Naive thymus-derived CD4-positive, alpha-beta T cell (primary cell): ENCODE measurements at regions of chr6 and their contacts with region 1.

Region 1: DNA sequence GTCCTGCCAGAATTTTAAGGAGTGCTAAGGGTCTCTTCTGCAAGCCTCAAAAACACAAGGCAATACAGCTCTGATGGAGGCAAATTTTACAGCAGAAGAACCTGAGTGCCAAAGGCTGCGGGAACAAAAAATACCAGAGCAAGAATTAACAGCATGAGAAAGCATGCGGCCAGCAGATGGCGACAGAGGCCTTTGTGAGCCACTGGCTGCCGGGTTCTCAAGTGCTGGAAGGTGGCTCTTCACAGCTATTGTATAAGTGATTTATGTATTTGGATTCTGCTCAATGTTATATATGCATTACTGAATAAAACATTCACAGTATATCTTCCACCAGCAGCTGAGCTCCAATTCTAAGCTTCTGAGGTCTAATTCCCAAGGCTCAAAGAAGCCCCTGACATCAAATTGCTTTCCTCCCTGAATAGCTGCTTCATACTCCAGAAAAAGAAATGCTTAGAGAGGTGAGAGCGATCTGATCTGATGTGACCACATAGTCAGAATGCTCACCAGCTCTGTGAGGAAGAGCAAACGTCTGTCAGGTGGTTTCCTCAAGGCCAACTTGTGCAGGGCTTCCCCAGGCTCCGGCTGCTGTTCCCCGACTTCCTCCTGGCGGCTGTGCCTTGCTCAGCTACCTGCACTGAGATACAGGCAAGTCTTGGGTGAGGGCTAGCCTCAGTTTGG is 58.6 kb downstream of the PPP1R3G start:
- DNase-seq: peak; percentile 61 to 86 (median 73)
- ATAC-seq: peak; percentile 84
- H3K4me3 ChIP-seq: no peak overlapping the region
- H3K4me3 Mint-ChIP-seq: no peak overlapping the region
- H3K27ac ChIP-seq: no peak overlapping the region
- H3K27ac Mint-ChIP-seq: peak overlapping the region in 2 of 9 donors; percentile 18 to 25
- H3K4me1 ChIP-seq: no peaks in the 10 kb centered on the region
- H3K4me1 Mint-ChIP-seq: peaks cover 0 to 7% (median 5%) of the 10 kb centered on the region in 7 donors
- H3K27me3 ChIP-seq: no peaks in the 10 kb centered on the region
- H3K27me3 Mint-ChIP-seq: no peaks in the 10 kb centered on the region

Region 2: DNA sequence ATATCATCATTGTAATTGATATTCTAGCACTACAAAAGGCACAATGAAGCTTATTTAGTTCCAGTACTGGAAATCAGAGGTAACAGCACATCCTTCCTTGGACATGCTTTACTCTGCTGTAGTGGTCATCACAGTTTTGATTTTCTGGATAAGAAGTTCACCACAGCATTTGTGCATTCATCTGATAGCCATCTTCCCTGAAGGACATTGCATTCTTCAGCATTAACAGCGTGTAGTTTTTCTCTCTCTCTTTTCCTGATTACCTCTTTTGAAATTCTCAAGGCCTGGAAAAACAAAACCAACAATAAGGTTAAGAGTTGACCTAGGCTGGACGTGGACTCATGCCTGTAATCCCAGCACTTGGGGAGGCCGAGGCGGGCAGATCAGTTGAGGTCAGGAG is 1028.0 kb before region 1 on chr6:
- CTCF ChIA-PET with region 1: no interaction called
- POLR2A ChIA-PET with region 1: no interaction called
- intact Hi-C with region 1: no loop called
- DNase-seq: no peak
- ATAC-seq: no peak
- H3K4me3 ChIP-seq: no peak overlapping the region
- H3K4me3 Mint-ChIP-seq: peak overlapping the region in 1 of 10 donors; percentile 52
- H3K27ac ChIP-seq: no peak overlapping the region
- H3K27ac Mint-ChIP-seq: no peak overlapping the region
- H3K4me1 ChIP-seq: no peaks in the 10 kb centered on the region
- H3K4me1 Mint-ChIP-seq: peaks cover 0 to 4% (median 0%) of the 10 kb centered on the region in 7 donors
- H3K27me3 ChIP-seq: no peaks in the 10 kb centered on the region
- H3K27me3 Mint-ChIP-seq: peaks cover 0 to 17% (median 0%) of the 10 kb centered on the region in 5 donors

Region 3: DNA sequence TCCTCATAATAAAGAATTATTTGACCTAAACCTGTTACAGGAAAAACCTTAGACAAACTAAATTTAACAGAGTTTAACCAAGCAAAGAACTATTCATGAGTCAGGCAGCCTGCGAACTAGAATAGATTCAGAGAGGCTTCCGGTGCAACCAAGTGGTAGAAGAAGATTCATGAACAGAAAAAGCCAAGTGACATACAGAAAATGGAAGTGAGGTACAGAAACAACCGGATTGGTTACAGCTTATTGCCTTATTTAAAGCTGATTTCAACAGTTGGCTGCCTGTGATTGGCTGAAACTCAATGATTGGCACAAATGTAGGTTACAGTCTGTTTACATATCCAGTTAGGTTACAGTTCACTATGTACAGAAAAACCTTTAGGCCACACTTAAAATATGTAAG is 48.5 kb before region 1 on chr6:
- CTCF ChIA-PET with region 1: no interaction called
- POLR2A ChIA-PET with region 1: no interaction called
- intact Hi-C with region 1: no loop called
- DNase-seq: no peak
- ATAC-seq: no peak
- H3K4me3 ChIP-seq: no peak overlapping the region
- H3K4me3 Mint-ChIP-seq: no peak overlapping the region
- H3K27ac ChIP-seq: no peak overlapping the region
- H3K27ac Mint-ChIP-seq: no peak overlapping the region
- H3K4me1 ChIP-seq: no peaks in the 10 kb centered on the region
- H3K4me1 Mint-ChIP-seq: peaks cover 0 to 18% (median 14%) of the 10 kb centered on the region in 7 donors
- H3K27me3 ChIP-seq: no peaks in the 10 kb centered on the region
- H3K27me3 Mint-ChIP-seq: peaks cover 19 to 26% (median 22%) of the 10 kb centered on the region in 5 donors

Region 4: GRCh38 chr6:5174244-5174643 is 30.5 kb after region 1 on chr6:
- CTCF ChIA-PET with region 1: interaction called, 9 read pairs
- POLR2A ChIA-PET with region 1: interaction called, 5 read pairs
- intact Hi-C with region 1: loop called (anchors 1 kb)
- DNase-seq: peak in 8 of 9 donors; percentile 34 to 79 (median 71)
- ATAC-seq: peak; percentile 93
- H3K4me3 ChIP-seq: peak overlapping the region; percentile 46
- H3K4me3 Mint-ChIP-seq: peak overlapping the region; percentile 18 to 86 (median 78)
- H3K27ac ChIP-seq: peak overlapping the region; percentile 67
- H3K27ac Mint-ChIP-seq: peak overlapping the region; percentile 79 to 96 (median 92)
- H3K4me1 ChIP-seq: peaks cover 23 to 38% of the 10 kb centered on the region in 2 donors
- H3K4me1 Mint-ChIP-seq: peaks cover 31 to 75% (median 64%) of the 10 kb centered on the region in 7 donors
- H3K27me3 ChIP-seq: no peaks in the 10 kb centered on the region
- H3K27me3 Mint-ChIP-seq: no peaks in the 10 kb centered on the region

Region 5: DNA sequence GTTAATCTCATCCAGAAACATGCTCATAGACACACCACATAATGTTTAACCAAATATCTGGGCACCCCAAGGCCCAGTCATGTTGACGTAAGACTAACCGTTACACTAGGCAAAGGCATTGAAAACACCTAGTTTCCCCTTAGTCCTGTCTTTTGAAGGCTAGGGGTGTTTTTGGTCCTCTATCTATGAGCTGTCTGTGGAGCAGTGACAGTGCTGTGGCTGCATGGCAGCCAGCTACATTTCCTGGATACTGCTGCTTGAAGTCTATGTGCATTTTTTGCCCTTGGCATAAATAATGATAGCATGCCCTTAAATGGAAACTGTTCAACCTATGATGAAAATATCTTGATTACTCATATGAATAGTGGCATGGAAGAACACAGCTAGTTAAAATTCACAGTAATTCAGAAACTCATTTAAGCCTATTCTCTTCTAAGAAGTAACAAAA is 136.1 kb after region 1 on chr6:
- CTCF ChIA-PET with region 1: interaction called, 8 read pairs
- POLR2A ChIA-PET with region 1: no interaction called
- intact Hi-C with region 1: loop called in 1 of 2 experiments (anchors 1 kb)
- DNase-seq: no peak
- ATAC-seq: peak; percentile 18
- H3K4me3 ChIP-seq: no peak overlapping the region
- H3K4me3 Mint-ChIP-seq: peak overlapping the region in 1 of 10 donors; percentile 64
- H3K27ac ChIP-seq: no peak overlapping the region
- H3K27ac Mint-ChIP-seq: peak overlapping the region in 1 of 9 donors; percentile 70
- H3K4me1 ChIP-seq: no peaks in the 10 kb centered on the region
- H3K4me1 Mint-ChIP-seq: peaks cover 17 to 58% (median 39%) of the 10 kb centered on the region in 7 donors
- H3K27me3 ChIP-seq: no peaks in the 10 kb centered on the region
- H3K27me3 Mint-ChIP-seq: no peaks in the 10 kb centered on the region

Region 6: DNA sequence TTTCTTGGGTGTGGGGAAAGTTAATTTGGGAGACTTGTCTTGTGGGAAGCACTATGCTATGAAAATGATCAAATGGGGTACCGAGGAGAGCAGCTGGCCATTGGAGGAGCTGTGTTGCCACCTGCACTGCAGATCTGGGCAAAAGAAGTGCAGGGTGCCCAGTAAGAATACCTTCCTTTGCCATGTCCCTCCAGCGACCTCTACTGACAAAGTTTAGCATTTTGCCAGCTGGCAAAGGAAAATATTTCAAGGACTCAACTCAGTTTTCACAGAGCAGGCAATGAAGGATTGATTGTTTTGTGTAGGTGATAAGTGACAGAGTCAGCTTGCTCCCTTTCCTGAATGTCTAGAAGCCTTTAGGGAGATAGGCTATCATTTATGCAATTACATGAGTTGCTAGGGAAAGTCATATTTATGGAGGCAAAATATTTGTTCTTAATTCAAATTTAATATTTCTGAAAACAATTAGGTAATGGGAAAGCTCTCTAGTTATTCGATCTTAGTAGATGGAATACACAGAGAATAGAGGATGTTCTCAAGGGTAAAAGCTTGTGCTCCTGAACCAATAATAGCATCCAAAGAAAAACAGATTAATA is 236.0 kb after region 1 on chr6:
- CTCF ChIA-PET with region 1: interaction called, 4 read pairs
- POLR2A ChIA-PET with region 1: no interaction called
- intact Hi-C with region 1: loop called in 1 of 2 experiments (anchors 1 kb)
- DNase-seq: peak in 1 of 9 donors; percentile 28
- ATAC-seq: no peak
- H3K4me3 ChIP-seq: no peak overlapping the region
- H3K4me3 Mint-ChIP-seq: no peak overlapping the region
- H3K27ac ChIP-seq: no peak overlapping the region
- H3K27ac Mint-ChIP-seq: no peak overlapping the region
- H3K4me1 ChIP-seq: no peaks in the 10 kb centered on the region
- H3K4me1 Mint-ChIP-seq: peaks cover 0 to 14% (median 6%) of the 10 kb centered on the region in 7 donors
- H3K27me3 ChIP-seq: no peaks in the 10 kb centered on the region
- H3K27me3 Mint-ChIP-seq: no peaks in the 10 kb centered on the region

Region 7: DNA sequence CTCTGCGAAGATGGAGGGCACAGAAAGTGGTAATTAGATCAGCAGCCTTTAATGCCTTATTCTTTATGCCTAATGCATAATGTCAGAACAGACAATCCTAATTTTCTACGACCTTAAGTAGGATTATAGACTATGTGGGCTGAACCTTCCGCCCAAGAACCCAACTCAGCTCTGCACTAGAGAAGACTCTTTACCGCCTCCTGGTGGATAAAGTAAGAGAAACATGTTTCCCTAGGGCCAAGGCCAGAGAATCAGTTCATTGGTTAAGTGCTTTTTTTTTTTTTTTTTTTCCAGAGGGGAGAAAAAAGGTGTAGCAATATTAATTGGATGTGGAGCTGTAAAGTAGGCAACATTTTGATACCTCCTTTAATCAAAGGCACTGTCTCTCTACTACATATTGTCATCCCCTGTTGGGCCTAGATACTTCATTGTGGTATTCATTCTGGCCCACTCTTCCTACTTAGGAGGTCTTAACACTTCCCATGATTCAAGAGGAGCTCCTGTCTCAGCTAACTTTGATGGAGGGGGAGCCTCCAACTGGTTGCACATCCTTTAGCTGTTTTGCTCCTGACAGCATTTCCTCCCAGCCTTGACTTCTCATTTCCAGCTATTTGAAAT is 987.8 kb after region 1 on chr6:
- CTCF ChIA-PET with region 1: no interaction called
- POLR2A ChIA-PET with region 1: no interaction called
- intact Hi-C with region 1: loop called in 1 of 2 experiments (anchors 2 kb)
- DNase-seq: peak in 5 of 9 donors; percentile 3 to 31 (median 21)
- ATAC-seq: peak; percentile 52
- H3K4me3 ChIP-seq: no peak overlapping the region
- H3K4me3 Mint-ChIP-seq: no peak overlapping the region
- H3K27ac ChIP-seq: no peak overlapping the region
- H3K27ac Mint-ChIP-seq: no peak overlapping the region
- H3K4me1 ChIP-seq: no peaks in the 10 kb centered on the region
- H3K4me1 Mint-ChIP-seq: no peaks in the 10 kb centered on the region
- H3K27me3 ChIP-seq: no peaks in the 10 kb centered on the region
- H3K27me3 Mint-ChIP-seq: peaks cover 0 to 13% (median 8%) of the 10 kb centered on the region in 5 donors